ENCODE measurements at regions of chr1 and their contacts with region 1.

Region 1: DNA sequence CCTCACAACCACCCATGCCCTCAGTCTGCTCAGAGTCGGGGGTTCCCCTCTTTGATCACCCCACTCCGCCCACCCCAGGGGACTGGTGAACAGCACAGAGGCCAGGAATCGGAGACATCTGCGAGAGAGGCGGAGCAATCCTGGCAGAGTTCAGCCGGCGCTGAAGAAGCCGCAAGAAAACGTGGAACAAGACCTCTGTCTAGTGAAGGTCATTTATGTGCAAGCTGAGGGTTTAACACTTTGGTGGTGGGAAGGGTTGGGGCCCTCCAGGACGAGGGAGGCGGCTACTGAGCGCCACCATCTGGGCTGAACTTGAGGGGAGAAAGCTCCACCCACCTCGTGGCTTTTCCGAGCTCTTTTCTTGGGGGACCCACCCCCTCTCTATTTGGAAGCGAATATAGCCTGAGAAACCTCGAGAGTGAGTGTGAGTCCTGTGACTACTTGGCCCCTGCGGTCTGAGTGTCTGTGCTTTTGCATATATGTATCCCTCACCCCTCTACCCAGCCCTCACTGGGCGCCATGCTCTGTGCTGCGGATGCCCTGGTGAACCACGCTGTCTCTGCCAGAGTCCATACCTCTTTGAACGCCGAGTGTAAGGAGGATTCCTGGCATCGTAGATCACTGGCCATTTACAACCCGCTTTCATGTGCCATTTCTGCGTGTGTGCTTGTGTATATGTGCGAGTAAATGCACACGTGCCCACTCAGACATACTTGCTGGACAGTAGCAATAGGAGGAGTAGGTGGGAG is 1.2 kb upstream of the EPHA10 start:
- DNase-seq: no peak
- H3K4me3 Mint-ChIP-seq: no peak overlapping the region
- H3K27ac Mint-ChIP-seq: no peak overlapping the region
- H3K4me1 Mint-ChIP-seq: peaks cover 12% of the 10 kb centered on the region
- H3K27me3 Mint-ChIP-seq: peaks cover 70% of the 10 kb centered on the region

Region 2: GRCh38 chr1:37704966-37705365 is 61.1 kb before region 1 on chr1:
- intact Hi-C with region 1: no loop called
- DNase-seq: no peak
- H3K4me3 Mint-ChIP-seq: no peak overlapping the region
- H3K27ac Mint-ChIP-seq: no peak overlapping the region
- H3K4me1 Mint-ChIP-seq: peaks cover 1% of the 10 kb centered on the region
- H3K27me3 Mint-ChIP-seq: no peaks in the 10 kb centered on the region

Region 3: GRCh38 chr1:37793773-37794371 is 27.8 kb after region 1 on chr1 and contains the start of gene MANEAL:
- intact Hi-C with region 1: loop called (anchors 2 kb)
- DNase-seq: no peak
- H3K4me3 Mint-ChIP-seq: peak within 1 kb of the TSS; percentile 80
- H3K27ac Mint-ChIP-seq: no peak within 1 kb of the TSS
- H3K4me1 Mint-ChIP-seq: peaks cover 14% of the 10 kb centered on the region
- H3K27me3 Mint-ChIP-seq: peaks cover 36% of the 10 kb centered on the region
- total RNA-seq, gene MANEAL: 3.6 and 4.0 TPM in 2 replicates